H1 (cell line): ENCODE measurements at regions of chr14 and their contacts with region 1.

Region 1: DNA sequence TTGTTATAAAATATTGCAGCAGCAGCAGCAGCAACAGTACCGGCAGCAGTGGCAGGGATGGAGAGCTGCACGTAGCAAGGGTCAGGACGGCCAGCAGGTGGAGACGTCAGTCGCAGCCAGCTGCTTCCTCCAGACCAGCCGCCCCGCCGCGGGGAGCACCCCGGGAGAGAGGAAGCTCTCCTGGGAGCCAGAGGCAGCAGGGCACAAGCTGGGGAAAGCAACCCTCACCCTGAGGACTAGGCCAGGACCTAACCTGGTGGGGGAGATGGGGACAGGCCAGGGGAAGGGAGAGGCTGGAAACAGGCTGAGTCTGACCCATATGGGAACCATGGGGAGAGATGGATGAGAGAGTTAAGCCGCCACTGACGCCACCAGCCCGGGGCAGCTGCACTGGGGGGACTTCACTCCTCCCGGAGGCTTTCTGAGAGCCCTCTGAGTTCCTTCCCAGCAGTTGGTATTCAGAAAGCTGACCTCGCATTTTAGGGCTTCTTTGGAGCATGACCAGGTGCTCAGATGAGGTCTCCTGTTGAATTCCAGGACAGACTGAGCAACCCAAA is 56.3 kb downstream of the SPTB start:
- DNase-seq: peak; percentile 41 to 86
- H3K4me3 ChIP-seq: no peak overlapping the region
- H3K27ac ChIP-seq: no peak overlapping the region
- H3K4me1 ChIP-seq: peaks cover 0 to 13% (median 5%) of the 10 kb centered on the region in 4 experiments; a peak in 4 of 7 replicates
- H3K27me3 ChIP-seq: no peaks in the 10 kb centered on the region; a peak in 1 of 7 replicates
- CTCF ChIP-seq: peak; percentile 78 to 98 (median 82)
- EP300 ChIP-seq: no peak
- POLR2A ChIP-seq: no peak
- RAD21 ChIP-seq: peak; percentile 83 to 85

Region 2: GRCh38 chr14:64566651-64567122 is 256.7 kb before region 1 on chr14:
- CTCF ChIA-PET with region 1: no interaction called
- POLR2A ChIA-PET with region 1: no interaction called
- DNase-seq: no peak
- H3K4me3 ChIP-seq: no peak overlapping the region
- H3K27ac ChIP-seq: no peak overlapping the region
- H3K4me1 ChIP-seq: peaks cover 0 to 7% (median 1%) of the 10 kb centered on the region in 4 experiments; a peak in 3 of 7 replicates
- H3K27me3 ChIP-seq: no peaks in the 10 kb centered on the region
- CTCF ChIP-seq: no peak
- EP300 ChIP-seq: no peak
- POLR2A ChIP-seq: no peak
- RAD21 ChIP-seq: no peak

Region 3: DNA sequence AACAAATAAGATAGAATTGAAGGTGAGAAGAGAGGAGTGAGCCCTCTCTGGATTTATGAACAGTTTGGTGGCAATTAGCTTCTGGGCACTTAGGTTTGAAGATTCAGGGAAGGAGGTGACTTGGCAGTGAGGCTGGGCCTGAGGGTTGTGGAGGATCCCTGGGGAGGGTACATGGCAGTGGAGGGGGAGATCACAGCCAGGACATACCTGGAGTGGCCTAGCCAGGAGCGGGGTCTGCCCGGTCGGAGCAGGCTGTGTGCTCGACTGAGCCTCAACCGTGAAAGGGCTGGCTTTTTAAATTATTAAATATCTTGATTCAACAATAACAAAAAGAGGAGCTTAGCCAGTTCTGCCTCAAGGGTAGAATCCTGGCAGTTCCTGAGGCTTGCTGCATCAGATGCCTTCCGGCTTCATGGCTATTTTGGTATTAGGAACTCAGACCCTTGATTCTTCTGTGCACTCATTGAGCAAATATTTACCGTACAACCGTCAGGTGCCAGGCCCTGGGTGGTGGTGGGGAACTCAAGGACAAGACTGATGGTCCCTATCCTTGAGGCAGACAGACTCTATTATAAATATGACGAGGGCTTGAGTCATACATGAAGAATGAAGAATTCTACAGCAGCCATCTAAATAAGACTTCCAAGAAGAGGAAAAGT is 17.1 kb before region 1 on chr14:
- CTCF ChIA-PET with region 1: interaction called, 96 read pairs
- POLR2A ChIA-PET with region 1: no interaction called
- DNase-seq: no peak
- H3K4me3 ChIP-seq: no peak overlapping the region
- H3K27ac ChIP-seq: no peak overlapping the region
- H3K4me1 ChIP-seq: no peaks in the 10 kb centered on the region; a peak in 1 of 7 replicates
- H3K27me3 ChIP-seq: no peaks in the 10 kb centered on the region
- CTCF ChIP-seq: no peak
- EP300 ChIP-seq: no peak
- POLR2A ChIP-seq: no peak
- RAD21 ChIP-seq: no peak

Region 4: DNA sequence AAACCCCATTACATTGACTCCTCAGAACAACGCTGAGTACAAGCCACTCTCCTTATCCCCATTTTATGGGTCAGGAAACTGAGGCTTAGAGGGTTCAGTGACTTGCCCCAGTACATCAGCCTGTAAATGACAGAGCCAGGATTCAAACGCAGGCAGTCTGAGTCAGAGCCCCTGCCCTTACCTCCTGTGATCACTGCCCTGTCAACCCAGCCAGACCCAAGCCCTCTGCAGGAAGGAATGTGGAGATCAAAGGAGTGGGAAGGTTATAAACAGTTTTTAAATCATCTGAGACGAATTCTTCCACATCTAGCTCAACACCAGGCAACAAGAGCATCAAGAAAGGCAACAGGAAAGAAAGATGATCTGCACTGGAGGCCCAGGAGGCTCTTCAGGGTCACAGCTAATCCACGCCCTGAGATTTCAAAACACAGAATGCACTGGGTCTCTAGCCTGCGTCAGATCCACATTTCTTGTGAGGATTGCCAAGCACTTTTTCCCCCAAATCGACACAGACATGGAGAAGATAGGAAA is 17.8 kb after region 1 on chr14:
- CTCF ChIA-PET with region 1: interaction called, 50 read pairs
- POLR2A ChIA-PET with region 1: no interaction called
- DNase-seq: peak in 1 of 2 experiments; percentile 21
- H3K4me3 ChIP-seq: no peak overlapping the region
- H3K27ac ChIP-seq: no peak overlapping the region
- H3K4me1 ChIP-seq: peaks cover 3 to 15% (median 6%) of the 10 kb centered on the region in 4 experiments; a peak in 3 of 7 replicates
- H3K27me3 ChIP-seq: no peaks in the 10 kb centered on the region
- CTCF ChIP-seq: peak; percentile 43 to 67 (median 54)
- EP300 ChIP-seq: no peak
- POLR2A ChIP-seq: no peak
- RAD21 ChIP-seq: peak; percentile 34 to 51

Region 5: GRCh38 chr14:64870160-64870559 is 46.8 kb after region 1 on chr14:
- CTCF ChIA-PET with region 1: interaction called, 36 read pairs
- POLR2A ChIA-PET with region 1: no interaction called
- DNase-seq: no peak
- H3K4me3 ChIP-seq: no peak overlapping the region
- H3K27ac ChIP-seq: no peak overlapping the region
- H3K4me1 ChIP-seq: peaks cover 0 to 11% (median 3%) of the 10 kb centered on the region in 4 experiments; a peak in 3 of 7 replicates
- H3K27me3 ChIP-seq: no peaks in the 10 kb centered on the region; a peak in 2 of 7 replicates
- CTCF ChIP-seq: no peak
- EP300 ChIP-seq: no peak
- POLR2A ChIP-seq: no peak
- RAD21 ChIP-seq: no peak

Region 6: DNA sequence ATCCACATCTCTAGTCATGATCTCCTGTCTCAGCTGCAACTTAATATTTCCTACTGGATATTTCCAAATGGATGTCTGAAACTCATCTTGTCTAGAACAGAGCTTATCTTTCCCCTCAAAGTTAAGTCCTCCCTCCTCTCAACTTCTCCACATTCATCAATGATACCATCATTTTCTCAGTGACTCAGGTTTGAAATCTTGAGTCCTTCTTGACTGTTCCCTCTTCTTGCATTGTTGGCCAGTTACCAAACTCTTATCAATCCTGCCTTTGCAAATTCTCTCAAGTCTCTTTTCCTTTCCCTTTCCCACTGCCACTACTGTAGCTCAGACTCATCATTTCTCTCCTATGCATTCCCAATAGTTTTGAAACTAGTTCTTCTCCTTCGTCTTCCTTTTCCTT is 76.6 kb after region 1 on chr14:
- CTCF ChIA-PET with region 1: interaction called, 12 read pairs
- POLR2A ChIA-PET with region 1: no interaction called
- DNase-seq: no peak
- H3K4me3 ChIP-seq: no peak overlapping the region
- H3K27ac ChIP-seq: no peak overlapping the region
- H3K4me1 ChIP-seq: no peaks in the 10 kb centered on the region
- H3K27me3 ChIP-seq: no peaks in the 10 kb centered on the region
- CTCF ChIP-seq: no peak
- EP300 ChIP-seq: no peak
- POLR2A ChIP-seq: no peak
- RAD21 ChIP-seq: no peak